GM10248 (cell line): ENCODE measurements at regions of chr2 and their contacts with region 1.

Region 1: GRCh38 chr2:142974288-142975024 is 97.0 kb downstream of the KYNU start:
- DNase-seq: no peak
- CTCF ChIP-seq: no peak

Region 2: GRCh38 chr2:142989273-142990204 is 15.1 kb after region 1 on chr2:
- CTCF ChIA-PET with region 1: interaction called, 13 read pairs
- POLR2A ChIA-PET with region 1: no interaction called
- DNase-seq: peak; percentile 15
- CTCF ChIP-seq: peak; percentile 43

Region 3: DNA sequence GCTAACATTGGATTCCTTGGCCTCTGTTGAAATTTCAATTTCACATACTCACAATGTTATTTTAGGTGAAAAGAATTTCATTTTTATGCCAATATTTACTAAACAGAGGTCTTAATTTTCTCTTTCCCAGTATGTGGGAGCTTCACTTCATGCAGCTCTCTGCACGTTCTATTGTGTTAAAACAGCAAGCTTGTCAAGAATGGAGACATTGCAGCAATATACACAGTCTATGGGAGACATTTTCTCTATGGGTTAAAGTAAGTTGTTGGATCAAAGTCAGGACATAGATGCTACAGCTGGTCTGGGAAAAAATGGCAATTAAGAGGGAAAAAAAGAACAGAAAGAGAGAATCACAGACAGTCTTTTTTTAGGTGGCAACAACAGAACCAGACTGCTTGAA is 84.4 kb after region 1 on chr2:
- CTCF ChIA-PET with region 1: no interaction called
- POLR2A ChIA-PET with region 1: no interaction called
- DNase-seq: no peak
- CTCF ChIP-seq: no peak